ENCODE measurements at regions of chr19 and their contacts with region 1.

Region 1: DNA sequence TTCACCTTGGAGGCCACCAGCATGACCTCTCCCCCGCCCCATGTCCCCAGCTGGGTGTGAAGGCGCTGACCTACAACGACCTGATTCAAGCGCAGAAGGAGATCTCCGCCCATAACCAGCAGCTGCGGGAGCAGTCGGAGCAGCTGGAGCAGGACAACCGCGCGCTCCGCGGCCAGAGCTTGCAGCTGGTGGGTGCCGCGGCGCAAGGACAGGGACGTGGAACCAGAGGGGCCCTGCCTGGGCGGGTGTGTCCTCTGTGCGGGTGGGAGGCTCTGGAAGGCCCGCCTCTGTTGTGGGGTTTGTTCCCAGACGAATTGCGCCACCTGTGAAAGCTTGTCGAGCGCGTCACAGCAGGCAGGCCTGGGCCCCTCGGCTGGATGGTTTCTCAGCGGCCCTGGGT is 22.3 kb downstream of the PLEKHJ1 start:
- DNase-seq: no peak
- H3K4me3 ChIP-seq: no peak overlapping the region
- H3K27ac ChIP-seq: no peak overlapping the region
- H3K4me1 ChIP-seq: no peaks in the 10 kb centered on the region
- H3K27me3 ChIP-seq: no peaks in the 10 kb centered on the region
- CTCF ChIP-seq: no peak

Region 2: GRCh38 chr19:2117215-2117960 is 96.4 kb before region 1 on chr19:
- CTCF ChIA-PET with region 1: no interaction called
- dilution Hi-C with region 1: loop called (anchors 5 kb)
- in situ Hi-C with region 1: no loop called
- intact Hi-C with region 1: no loop called
- DNase-seq: no peak
- H3K4me3 ChIP-seq: no peak overlapping the region
- H3K27ac ChIP-seq: no peak overlapping the region
- H3K4me1 ChIP-seq: peaks cover 18% of the 10 kb centered on the region
- H3K27me3 ChIP-seq: no peaks in the 10 kb centered on the region
- CTCF ChIP-seq: no peak

Region 3: GRCh38 chr19:2135474-2136402 is 78.1 kb before region 1 on chr19:
- CTCF ChIA-PET with region 1: no interaction called
- dilution Hi-C with region 1: no loop called
- in situ Hi-C with region 1: no loop called
- intact Hi-C with region 1: no loop called
- DNase-seq: no peak
- H3K4me3 ChIP-seq: no peak overlapping the region
- H3K27ac ChIP-seq: no peak overlapping the region
- H3K4me1 ChIP-seq: no peaks in the 10 kb centered on the region
- H3K27me3 ChIP-seq: no peaks in the 10 kb centered on the region
- CTCF ChIP-seq: no peak

Region 4: DNA sequence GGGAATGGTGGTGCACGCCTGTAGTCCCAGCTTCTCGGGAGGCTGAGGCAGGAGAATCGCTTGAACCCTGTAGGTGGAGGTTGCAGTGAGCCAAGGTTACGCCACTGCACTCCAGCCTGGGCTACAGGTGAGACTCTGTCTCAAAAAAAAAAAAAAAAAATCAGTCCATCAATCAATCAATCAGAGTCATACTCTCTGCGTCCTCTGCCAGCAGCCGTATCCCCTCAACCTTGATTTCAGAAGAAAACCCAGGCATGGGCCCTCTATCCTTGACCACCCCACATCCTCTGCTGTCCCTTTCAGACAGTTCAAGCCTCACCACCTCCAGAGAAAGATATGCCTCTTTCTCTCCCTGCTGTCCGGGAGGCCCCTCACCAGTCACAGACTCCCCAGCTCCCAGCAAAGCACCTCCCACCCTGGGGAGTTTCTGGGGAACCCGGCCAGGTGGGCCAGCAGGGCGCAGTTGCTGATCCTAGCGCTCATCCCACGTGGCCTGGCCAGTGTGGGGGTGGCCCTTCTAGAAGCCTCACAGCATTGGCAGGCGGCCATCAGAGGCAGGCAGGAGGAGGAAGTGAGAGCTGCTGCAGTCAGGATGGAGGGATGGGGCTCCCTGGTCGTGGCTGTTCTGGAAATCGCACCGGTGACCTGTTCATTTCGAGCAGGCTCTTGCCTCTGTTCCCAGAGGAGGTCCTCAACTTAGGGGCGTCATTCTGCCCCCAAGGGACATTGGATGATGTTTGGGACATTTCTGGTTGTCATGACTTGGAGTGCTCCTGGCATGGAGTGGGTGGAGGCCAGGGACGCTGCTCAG is 52.6 kb after region 1 on chr19:
- CTCF ChIA-PET with region 1: no interaction called
- dilution Hi-C with region 1: no loop called
- in situ Hi-C with region 1: no loop called
- intact Hi-C with region 1: no loop called
- DNase-seq: peak; percentile 67
- H3K4me3 ChIP-seq: no peak overlapping the region
- H3K27ac ChIP-seq: no peak overlapping the region
- H3K4me1 ChIP-seq: peaks cover 14% of the 10 kb centered on the region
- H3K27me3 ChIP-seq: no peaks in the 10 kb centered on the region
- CTCF ChIP-seq: no peak

Measured in mammary epithelial cell (primary cell).